RWPE1 (cell line): ENCODE measurements at regions of chr19 and their contacts with region 1.

Region 1: GRCh38 chr19:7943444-7944176 is at the start of gene TIMM44:
- DNase-seq: peak; percentile 99
- H3K27ac ChIP-seq: peak within 1 kb of the TSS; percentile 86
- CTCF ChIP-seq: no peak

Region 2: GRCh38 chr19:7575434-7576040 is 368.1 kb before region 1 on chr19:
- CTCF ChIA-PET with region 1: no interaction called
- POLR2A ChIA-PET with region 1: no interaction called
- DNase-seq: peak; percentile 56
- H3K27ac ChIP-seq: no peak overlapping the region
- CTCF ChIP-seq: no peak

Region 3: DNA sequence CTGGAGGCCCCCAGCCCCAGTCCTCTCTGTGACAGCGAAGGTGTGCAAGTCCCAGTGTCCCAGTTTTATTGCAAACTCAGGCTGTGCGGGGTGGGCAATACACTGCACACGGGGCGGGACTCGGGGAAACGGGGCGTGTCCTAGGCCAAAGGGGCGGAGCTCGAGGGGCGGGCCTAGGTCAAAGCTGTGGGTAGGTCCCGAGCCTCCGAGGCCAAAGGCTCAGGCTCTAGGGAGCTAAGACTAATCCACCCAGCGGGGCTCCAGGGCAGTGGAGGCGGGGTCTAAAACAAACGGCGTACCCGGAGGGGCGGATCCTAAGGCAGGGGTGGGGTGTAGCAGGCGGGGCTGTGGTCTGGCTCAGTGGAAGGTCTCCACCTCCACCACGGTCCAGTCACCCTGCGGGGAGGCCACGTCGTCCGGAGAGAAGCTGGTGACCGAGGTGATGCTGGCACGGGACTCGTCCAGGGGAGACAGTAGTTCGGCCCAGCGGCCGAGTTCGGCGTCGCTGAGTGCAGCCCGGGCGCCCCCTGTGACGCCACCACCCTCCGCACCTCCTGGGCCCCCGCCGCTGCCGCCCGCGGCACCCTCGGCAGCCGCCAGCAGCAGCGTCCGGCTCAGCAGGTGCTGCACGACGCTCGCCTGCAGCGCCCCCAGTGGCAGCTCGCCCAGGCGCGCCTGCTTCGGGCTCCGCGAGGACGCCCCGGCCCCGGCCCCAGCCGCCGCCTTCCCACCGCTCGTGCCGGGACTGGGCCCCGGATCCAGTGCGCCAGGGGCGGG is 74.7 kb before region 1 on chr19:
- CTCF ChIA-PET with region 1: no interaction called
- POLR2A ChIA-PET with region 1: no interaction called
- DNase-seq: peak; percentile 76
- H3K27ac ChIP-seq: peak overlapping the region; percentile 75
- CTCF ChIP-seq: peak; percentile 92

Region 4: GRCh38 chr19:7928736-7929701 is 14.6 kb before region 1 on chr19:
- CTCF ChIA-PET with region 1: interaction called, 11 read pairs
- POLR2A ChIA-PET with region 1: no interaction called
- DNase-seq: peak; percentile 58
- H3K27ac ChIP-seq: peak overlapping the region; percentile 95
- CTCF ChIP-seq: peak; percentile 48

Region 5: GRCh38 chr19:8023381-8023780 is 79.8 kb after region 1 on chr19:
- CTCF ChIA-PET with region 1: no interaction called
- POLR2A ChIA-PET with region 1: no interaction called
- DNase-seq: no peak
- H3K27ac ChIP-seq: no peak overlapping the region
- CTCF ChIP-seq: no peak

Region 6: DNA sequence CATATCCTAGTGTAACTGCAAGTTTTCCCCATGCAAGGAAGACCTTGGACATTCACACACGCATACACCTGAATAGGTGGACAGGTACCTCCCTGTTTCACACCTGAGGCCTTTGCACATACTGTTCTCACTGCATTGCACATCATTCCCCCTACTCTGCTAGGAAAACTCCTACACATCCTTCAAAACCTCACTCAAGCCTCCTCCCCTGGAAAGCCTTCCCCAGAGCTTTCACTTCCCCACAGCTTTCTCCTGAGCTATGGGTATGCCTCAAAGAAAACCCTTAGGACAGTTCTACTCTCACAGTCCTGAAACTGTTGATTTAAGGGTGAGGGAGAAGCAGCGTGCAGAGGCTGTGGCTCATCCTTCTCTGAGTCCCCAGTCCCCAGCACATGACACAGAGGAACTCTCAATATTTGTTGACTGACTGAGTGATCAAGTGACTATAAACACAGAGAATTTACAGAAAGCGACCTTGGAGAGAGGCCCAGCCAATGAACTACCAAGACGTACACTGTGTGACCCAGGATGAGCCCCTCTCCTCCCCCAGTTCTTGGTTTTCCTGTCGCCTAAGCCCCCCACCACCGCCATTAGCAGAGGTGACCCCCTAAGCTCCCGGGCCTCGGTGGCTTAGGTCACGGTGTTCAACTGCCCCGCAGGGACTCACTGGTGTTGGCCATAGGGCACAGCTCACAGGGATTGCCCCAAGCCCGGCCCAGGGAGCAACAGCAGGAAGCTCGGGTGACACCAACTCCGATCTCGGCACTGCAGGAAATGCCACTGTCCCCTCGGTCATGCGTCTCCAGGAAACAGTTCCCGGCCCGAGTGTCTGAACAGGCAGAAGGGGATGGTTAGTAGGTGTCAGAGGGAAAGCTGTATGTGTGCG is 165.2 kb after region 1 on chr19:
- CTCF ChIA-PET with region 1: no interaction called
- POLR2A ChIA-PET with region 1: no interaction called
- DNase-seq: no peak
- H3K27ac ChIP-seq: no peak overlapping the region
- CTCF ChIP-seq: no peak